ENCODE measurements at regions of chr22 and their contacts with region 1.

Region 1: DNA sequence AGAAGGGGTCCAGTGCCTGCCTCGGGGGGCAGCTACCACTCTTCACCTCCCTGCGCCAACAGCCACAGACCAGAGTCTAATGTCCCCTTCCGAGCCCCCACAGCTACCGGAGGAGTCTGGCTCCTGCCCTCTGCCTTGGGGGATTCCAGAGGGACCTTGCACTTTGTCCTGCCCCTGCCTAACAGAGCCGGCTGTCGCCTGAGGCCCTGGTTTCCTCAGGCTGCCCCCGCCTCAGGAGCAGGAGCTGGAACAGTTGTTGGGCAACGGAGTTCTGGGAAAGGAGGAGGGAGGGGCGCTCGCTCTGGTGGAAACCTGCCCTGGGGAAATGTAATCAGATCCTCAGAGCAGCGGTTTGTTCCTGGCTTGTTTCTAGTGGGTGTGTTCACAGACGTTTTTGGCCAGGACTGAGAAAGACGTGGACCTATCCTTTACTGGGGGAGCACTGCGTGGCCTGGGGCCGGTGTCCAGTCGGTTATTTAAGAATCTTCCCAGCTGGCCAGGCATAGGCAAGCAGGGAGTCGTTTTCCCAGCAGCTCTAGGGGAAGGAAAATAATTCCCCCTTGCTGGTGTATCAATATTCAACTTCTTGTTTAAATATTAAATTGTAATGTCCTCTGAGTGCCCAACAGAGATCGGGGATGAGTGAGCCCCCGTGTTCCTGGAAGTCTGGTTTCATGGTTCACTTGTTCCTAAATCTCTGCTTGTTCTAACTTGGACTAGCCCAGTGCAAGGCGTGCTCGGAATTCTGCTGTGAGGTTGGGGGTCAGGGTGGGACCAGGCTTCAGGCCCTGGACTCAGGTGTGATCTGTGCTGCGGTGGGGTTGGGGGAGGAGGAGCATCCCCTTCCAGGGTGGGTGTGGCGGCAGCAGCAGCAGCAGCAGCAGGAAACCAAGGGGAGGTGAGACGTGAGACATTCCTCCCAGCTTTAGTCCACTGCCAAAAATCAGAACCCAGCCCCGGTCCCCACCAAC is 32.1 kb downstream of the A4GALT start:
- DNase-seq: peak; percentile 99
- H3K4me3 Mint-ChIP-seq: peak overlapping the region; percentile 45
- H3K27ac Mint-ChIP-seq: peak overlapping the region; percentile 91
- H3K4me1 Mint-ChIP-seq: peaks cover 29% of the 10 kb centered on the region
- H3K27me3 Mint-ChIP-seq: no peaks in the 10 kb centered on the region
- CTCF ChIP-seq: no peak

Region 2: GRCh38 chr22:42642806-42643633 is 45.5 kb before region 1 on chr22:
- CTCF ChIA-PET with region 1: no interaction called
- POLR2A ChIA-PET with region 1: no interaction called
- intact Hi-C with region 1: no loop called
- DNase-seq: no peak
- H3K4me3 Mint-ChIP-seq: no peak overlapping the region
- H3K27ac Mint-ChIP-seq: no peak overlapping the region
- H3K4me1 Mint-ChIP-seq: peaks cover 24% of the 10 kb centered on the region
- H3K27me3 Mint-ChIP-seq: no peaks in the 10 kb centered on the region
- CTCF ChIP-seq: no peak

Region 3: GRCh38 chr22:42743501-42743991 is 55.0 kb after region 1 on chr22:
- CTCF ChIA-PET with region 1: no interaction called
- POLR2A ChIA-PET with region 1: interaction called, 22 read pairs
- intact Hi-C with region 1: no loop called
- DNase-seq: peak; percentile 91
- H3K4me3 Mint-ChIP-seq: peak overlapping the region; percentile 22
- H3K27ac Mint-ChIP-seq: peak overlapping the region; percentile 88
- H3K4me1 Mint-ChIP-seq: peaks cover 44% of the 10 kb centered on the region
- H3K27me3 Mint-ChIP-seq: no peaks in the 10 kb centered on the region
- CTCF ChIP-seq: no peak

Measured in MCF 10A (cell line).